Breast epithelium (tissue), 4 donors: ENCODE measurements at regions of chr20 and their contacts with region 1.

Region 1: GRCh38 chr20:42678886-42679285 is 510.8 kb downstream of the PTPRT start:
- DNase-seq: no peak
- H3K4me3 ChIP-seq: no peak overlapping the region
- H3K27ac ChIP-seq: no peak overlapping the region
- H3K4me1 ChIP-seq: no peaks in the 10 kb centered on the region
- H3K27me3 ChIP-seq: no peaks in the 10 kb centered on the region
- CTCF ChIP-seq: peak in 1 of 3 donors; percentile 18
- POLR2A ChIP-seq: no peak

Region 2: DNA sequence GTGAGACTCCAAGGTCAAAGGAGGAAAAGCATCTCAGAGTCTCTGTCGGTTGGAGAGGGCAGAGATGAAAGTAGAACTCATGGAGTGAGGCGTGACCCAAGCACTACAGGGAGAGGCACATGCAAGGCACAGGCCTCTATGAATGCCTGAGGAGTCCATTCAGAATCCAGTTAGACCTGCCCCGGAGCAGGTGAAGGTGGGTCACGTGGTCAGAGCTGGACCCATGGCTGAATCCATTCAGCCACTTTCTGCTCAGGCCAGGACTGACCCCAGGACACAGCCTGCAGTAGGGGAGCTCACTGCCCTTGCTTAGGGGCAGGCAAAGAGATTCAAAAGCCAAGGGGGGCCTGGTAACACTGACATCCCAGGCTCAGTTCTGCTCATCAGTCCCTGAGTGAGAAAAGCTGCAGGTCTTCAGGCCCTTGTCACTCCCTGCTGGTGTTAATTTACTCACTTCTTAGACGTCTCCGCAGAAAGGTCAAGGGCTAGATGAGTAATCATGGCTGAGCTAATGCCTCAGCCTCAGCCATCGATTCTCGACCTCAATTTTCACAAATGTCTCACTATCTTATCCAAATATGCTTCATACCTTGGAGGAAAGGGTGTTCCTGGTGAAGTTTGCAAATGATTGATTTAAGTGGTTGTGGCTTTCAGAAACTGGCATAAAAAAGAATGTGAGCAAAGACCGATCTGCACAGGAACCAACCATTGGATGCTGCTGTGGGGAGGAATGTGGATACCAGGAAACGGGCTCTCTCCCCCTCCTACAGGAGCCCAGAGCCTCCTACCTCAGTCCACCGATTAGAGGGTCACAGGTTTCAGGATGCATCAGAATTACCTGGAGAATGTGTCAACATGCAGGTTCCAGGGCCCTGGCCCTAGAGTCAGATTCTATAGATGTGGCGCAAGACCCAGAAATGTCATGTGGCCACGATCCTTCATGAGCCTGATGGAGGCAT is 73.6 kb before region 1 on chr20:
- intact Hi-C with region 1: no loop called
- DNase-seq: no peak
- H3K4me3 ChIP-seq: no peak overlapping the region
- H3K27ac ChIP-seq: no peak overlapping the region
- H3K4me1 ChIP-seq: no peaks in the 10 kb centered on the region
- H3K27me3 ChIP-seq: no peaks in the 10 kb centered on the region
- CTCF ChIP-seq: no peak
- POLR2A ChIP-seq: no peak

Region 3: DNA sequence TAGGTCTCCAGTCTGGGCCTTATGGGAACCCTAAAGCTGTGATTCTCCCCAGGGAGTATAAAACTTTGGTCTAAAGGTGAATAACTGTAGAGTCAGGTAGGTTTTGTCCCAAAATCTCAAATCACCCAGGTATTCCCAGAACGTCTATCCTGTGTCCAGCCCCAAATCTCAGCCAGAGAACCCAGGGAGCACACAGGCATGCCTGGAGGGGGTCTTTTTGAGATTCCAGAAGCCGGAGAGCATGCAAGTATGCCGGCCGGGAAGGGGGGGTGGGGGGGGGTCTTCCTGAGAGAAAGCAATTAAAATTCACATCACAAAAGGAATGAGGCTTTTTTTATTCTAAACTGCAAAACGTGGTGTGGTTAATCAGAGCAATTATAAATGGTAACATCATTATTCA is 300.8 kb after region 1 on chr20:
- intact Hi-C with region 1: loop called (anchors 2 kb)
- DNase-seq: no peak
- H3K4me3 ChIP-seq: no peak overlapping the region
- H3K27ac ChIP-seq: no peak overlapping the region
- H3K4me1 ChIP-seq: no peaks in the 10 kb centered on the region
- H3K27me3 ChIP-seq: no peaks in the 10 kb centered on the region
- CTCF ChIP-seq: no peak
- POLR2A ChIP-seq: no peak